ENCODE measurements at regions of chr16 and their contacts with region 1.

Region 1: GRCh38 chr16:17448640-17449638 is 21.8 kb downstream of the XYLT1 start:
- DNase-seq: peak; percentile 51
- H3K4me3 ChIP-seq: peak overlapping the region; percentile 29
- H3K27ac ChIP-seq: peak overlapping the region; percentile 70
- H3K4me1 ChIP-seq: peaks cover 40% of the 10 kb centered on the region
- CTCF ChIP-seq: 0 out of 2 replicates have a peak, but pooled peaks have one; percentile 21

Region 2: DNA sequence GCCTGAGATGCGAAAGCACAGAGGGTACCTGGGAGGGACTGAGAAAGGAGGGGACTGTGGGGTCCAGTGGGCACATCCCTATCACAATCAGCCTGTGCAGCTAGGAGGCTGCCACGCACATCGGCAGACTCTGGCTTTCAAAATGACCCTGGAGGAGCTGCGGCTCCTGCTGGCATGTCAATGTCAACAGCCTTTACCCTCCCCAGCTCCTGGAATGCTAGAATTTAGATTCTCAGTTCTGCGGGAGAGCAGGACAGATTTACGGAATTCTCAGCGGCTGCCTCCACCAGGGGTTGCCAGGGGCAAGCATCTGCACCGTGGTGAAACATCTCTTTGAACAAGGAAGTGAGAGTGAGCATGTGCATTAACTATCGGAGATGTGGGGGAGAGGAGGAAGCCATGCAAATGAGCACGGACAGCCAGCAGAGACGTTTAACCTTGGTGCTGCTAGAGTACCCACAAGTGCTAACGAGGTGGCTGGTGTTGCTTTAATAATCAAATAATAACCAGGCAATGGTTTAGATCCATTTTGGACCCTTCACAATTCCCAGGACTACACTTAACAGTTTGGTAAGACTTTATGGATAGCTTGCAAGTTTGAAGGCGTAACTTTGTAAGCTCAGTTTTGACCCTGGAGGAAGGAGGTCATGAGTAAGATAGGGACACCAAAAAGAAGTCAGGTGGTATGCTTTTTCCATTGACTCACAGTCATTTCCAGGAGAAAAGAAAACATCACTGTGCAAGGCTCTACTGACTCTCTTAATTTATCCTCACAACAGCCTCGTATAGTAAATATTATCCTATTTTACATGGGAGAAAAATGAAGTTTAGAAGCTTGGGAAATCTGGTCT is 32.3 kb before region 1 on chr16:
- CTCF ChIA-PET with region 1: interaction called, 3 read pairs
- POLR2A ChIA-PET with region 1: interaction called, 8 read pairs
- intact Hi-C with region 1: loop called (anchors 2 kb)
- DNase-seq: peak; percentile 92
- H3K4me3 ChIP-seq: peak overlapping the region; percentile 64
- H3K27ac ChIP-seq: peak overlapping the region; percentile 87
- H3K4me1 ChIP-seq: peaks cover 50% of the 10 kb centered on the region
- CTCF ChIP-seq: peak; percentile 70

Region 3: DNA sequence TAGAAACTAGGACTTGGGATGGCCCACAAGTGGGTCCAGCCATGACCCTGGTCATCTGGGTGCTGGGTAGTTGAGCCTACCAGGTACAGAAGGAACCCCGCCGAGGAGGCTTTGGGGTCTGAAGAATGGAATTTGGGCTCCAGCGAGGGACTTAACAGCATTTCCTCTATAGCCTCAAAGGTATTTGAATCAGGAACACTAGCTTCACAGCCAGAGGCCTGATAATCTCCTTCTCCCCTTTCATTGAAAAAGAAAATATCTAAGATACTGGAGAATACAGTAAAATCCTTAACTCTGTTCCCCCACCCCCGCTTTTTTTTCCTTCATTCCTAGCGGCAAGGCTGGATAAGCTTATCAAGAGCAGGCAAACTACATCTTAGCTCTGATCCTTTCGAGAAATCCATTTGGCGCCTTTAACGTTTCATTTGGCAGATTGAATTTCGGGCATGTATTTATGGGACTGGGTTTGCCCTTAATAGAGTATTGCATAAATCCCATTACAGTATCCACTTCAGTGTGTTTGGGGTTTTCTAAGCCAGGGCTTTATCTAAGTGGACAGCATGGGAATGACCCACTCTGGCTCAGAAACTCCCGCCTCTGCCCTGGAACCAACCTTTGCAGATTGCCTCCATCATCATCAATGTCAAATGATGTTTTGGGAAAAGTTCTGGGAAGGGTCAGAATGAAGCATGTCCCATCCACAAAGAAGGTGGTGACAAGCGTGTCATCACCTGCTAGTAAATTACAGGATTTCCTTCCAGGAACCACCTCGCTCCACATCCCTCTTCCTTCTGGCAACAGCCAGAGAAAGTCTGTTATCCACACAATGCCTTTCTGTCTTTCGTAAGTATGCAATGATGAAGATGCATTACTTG is 15.1 kb before region 1 on chr16:
- CTCF ChIA-PET with region 1: no interaction called
- POLR2A ChIA-PET with region 1: interaction called, 11 read pairs
- intact Hi-C with region 1: no loop called
- DNase-seq: no peak
- H3K4me3 ChIP-seq: no peak overlapping the region
- H3K27ac ChIP-seq: no peak overlapping the region
- H3K4me1 ChIP-seq: peaks cover 36% of the 10 kb centered on the region
- CTCF ChIP-seq: no peak

Measured in OCI-LY7 (cell line).